Left lung (tissue), 14 donors: ENCODE measurements at regions of chr4 and their contacts with region 1.

Region 1: DNA sequence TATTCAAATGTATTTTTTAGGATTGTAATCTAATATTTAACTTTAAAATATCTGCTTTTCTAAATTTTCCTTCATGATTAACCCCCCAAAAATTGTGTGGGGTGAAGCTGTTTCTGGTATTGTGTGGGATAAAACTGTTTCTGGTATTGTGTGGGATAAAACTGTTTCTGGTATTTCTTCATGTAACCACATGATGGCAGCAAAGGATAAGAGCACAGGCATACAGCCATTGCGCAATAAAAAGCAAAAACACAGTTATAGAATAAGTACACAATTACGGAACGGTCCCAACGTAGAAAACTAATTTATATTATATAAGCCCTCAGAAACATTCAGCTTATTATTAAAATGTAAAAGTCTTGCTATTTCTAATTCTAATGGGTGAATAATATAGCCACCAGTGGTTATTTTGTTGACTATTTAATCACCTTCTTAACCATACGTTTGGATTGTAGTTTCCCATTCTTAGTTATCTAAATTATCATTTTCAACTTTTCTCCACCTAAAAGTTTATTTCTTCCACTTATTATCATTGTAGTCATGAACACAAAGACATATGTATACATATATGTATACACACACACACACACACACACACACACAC is 333.9 kb upstream of the FSTL5 start:
- DNase-seq: peak in 2 of 4 donors; percentile 37 to 58
- ATAC-seq: peak; percentile 94
- H3K4me3 ChIP-seq: no peak overlapping the region
- H3K27ac ChIP-seq: no peak overlapping the region
- H3K4me1 ChIP-seq: no peaks in the 10 kb centered on the region
- H3K27me3 ChIP-seq: peaks cover 0 to 5% of the 10 kb centered on the region in 2 donors
- CTCF ChIP-seq: peak; percentile 53 to 77

Region 2: GRCh38 chr4:162401021-162401420 is 96.6 kb before region 1 on chr4:
- intact Hi-C with region 1: no loop called
- DNase-seq: peak in 2 of 4 donors; percentile 23 to 42
- ATAC-seq: no peak
- H3K4me3 ChIP-seq: no peak overlapping the region
- H3K27ac ChIP-seq: no peak overlapping the region
- H3K4me1 ChIP-seq: no peaks in the 10 kb centered on the region
- H3K27me3 ChIP-seq: no peaks in the 10 kb centered on the region
- CTCF ChIP-seq: no peak

Region 3: GRCh38 chr4:163042306-163042705 is 544.6 kb after region 1 on chr4:
- intact Hi-C with region 1: loop called in 1 of 2 experiments (anchors 10 kb)
- DNase-seq: no peak
- ATAC-seq: no peak
- H3K4me3 ChIP-seq: no peak overlapping the region
- H3K27ac ChIP-seq: no peak overlapping the region
- H3K4me1 ChIP-seq: no peaks in the 10 kb centered on the region
- H3K27me3 ChIP-seq: no peaks in the 10 kb centered on the region
- CTCF ChIP-seq: no peak

Region 4: GRCh38 chr4:163544407-163545038 is 1046.9 kb after region 1 on chr4:
- intact Hi-C with region 1: loop called in 1 of 2 experiments (anchors 10 kb)
- DNase-seq: peak; percentile 39 to 85 (median 63)
- ATAC-seq: peak; percentile 92
- H3K4me3 ChIP-seq: no peak overlapping the region
- H3K27ac ChIP-seq: no peak overlapping the region
- H3K4me1 ChIP-seq: peaks cover 0 to 7% of the 10 kb centered on the region in 2 donors
- H3K27me3 ChIP-seq: no peaks in the 10 kb centered on the region
- CTCF ChIP-seq: peak; percentile 81 to 85